Endothelial cell of umbilical vein (primary cell): ENCODE measurements at regions of chr4 and their contacts with region 1.

Region 1: DNA sequence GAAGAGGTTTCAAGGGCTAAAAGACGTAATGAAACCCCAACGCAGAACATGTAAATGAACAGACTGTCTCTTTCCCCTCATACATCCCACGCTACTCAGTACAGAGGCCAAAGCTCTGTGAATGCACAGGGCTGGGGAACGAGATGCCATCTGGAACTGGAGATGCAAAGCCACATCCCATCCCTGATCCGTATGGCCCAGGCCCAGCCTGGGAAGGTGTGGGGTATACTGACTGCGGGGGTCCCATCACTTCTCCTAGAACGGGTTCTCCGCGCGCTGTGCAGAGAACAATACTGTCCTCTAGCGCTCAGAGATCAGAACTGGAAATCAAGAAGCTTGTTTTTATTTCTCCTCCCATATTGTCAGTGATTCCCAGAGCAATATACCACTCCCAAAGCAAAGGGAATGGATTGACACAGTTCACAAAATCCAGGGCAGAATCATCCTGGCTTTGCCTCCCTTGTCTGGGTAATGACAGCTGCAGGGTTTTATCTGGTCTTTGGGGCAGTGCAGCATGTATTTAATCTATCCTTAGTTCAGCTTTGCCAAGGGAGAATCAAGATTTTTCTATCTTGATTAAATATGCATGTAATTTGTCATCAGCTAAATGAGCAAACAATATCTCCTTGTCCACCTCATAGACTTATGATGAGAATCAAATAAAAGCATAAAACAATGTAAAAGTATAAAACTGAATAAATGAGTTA is 47.3 kb upstream of the TLR3 start:
- DNase-seq: peak; percentile 69
- H3K4me3 ChIP-seq: no peak overlapping the region
- H3K27ac ChIP-seq: no peak overlapping the region
- H3K4me1 ChIP-seq: no peaks in the 10 kb centered on the region
- H3K27me3 ChIP-seq: no peaks in the 10 kb centered on the region
- CTCF ChIP-seq: peak; percentile 73 to 82
- POLR2A ChIP-seq: no peak

Region 2: GRCh38 chr4:185471235-185472102 is 550.1 kb before region 1 on chr4 and contains the start of gene CCDC110:
- CTCF ChIA-PET with region 1: interaction called, 10 read pairs
- POLR2A ChIA-PET with region 1: no interaction called
- dilution Hi-C with region 1: no loop called
- intact Hi-C with region 1: loop called (anchors 1 kb)
- DNase-seq: peak; percentile 90
- H3K4me3 ChIP-seq: peak within 1 kb of the TSS; percentile 43 to 80 (median 57)
- H3K27ac ChIP-seq: peak within 1 kb of the TSS; percentile 41
- H3K4me1 ChIP-seq: peaks cover 8% of the 10 kb centered on the region
- H3K27me3 ChIP-seq: peaks cover 15% of the 10 kb centered on the region in 2 experiments
- CTCF ChIP-seq: peak; percentile 32 to 57
- POLR2A ChIP-seq: no peak
- total RNA-seq, gene CCDC110: 0.28 and 0.71 TPM in 2 replicates

Region 3: DNA sequence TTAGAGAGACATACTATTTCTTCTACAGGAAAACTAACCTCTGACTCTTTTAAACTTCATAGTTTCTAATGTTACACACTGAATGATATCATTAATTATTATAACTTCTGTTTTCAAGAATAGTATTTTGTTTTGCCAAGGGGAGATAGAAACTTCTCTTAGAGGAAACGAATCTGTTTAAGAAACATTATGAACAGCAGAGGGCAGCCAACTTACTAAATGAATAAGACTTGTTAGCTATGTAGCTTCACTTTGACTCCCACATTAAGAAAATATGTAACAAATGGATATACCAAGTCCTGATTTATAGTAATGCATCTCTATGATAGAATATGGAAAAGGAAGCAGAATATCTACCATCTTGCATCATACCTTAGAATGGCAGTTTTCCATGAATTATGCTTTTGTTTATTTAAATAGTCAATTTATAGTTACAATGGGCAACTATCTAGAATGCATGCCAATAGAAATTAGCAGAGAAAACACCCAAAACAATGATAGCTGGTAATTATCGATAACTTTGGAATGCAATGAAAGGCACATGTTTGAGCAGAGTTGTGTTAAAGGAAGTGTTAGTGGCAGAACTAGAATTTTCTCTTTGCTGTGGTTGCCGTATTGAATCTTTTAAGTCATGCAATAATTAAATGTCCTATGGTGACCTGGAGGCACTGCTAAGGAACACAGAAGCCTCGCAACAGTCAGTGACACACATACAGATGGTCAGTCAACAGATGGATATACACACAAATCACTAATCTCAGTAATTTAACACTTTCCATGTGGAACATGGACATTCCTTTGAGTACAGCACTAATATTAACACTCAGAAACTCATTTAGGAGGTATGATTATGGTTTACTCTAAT is 380.6 kb before region 1 on chr4:
- CTCF ChIA-PET with region 1: interaction called, 380 read pairs
- POLR2A ChIA-PET with region 1: interaction called, 8 read pairs
- dilution Hi-C with region 1: loop called (anchors 25 kb)
- intact Hi-C with region 1: loop called (anchors 1 kb)
- DNase-seq: peak; percentile 69
- H3K4me3 ChIP-seq: no peak overlapping the region
- H3K27ac ChIP-seq: no peak overlapping the region
- H3K4me1 ChIP-seq: no peaks in the 10 kb centered on the region
- H3K27me3 ChIP-seq: no peaks in the 10 kb centered on the region
- CTCF ChIP-seq: peak in 1 of 2 donors; percentile 33
- POLR2A ChIP-seq: no peak

Region 4: GRCh38 chr4:185693548-185694215 is 327.9 kb before region 1 on chr4:
- CTCF ChIA-PET with region 1: interaction called, 17 read pairs
- POLR2A ChIA-PET with region 1: no interaction called
- dilution Hi-C with region 1: no loop called
- intact Hi-C with region 1: no loop called
- DNase-seq: peak; percentile 90
- H3K4me3 ChIP-seq: peak overlapping the region; percentile 1 to 46 (median 9)
- H3K27ac ChIP-seq: peak overlapping the region; percentile 84
- H3K4me1 ChIP-seq: peaks cover 19% of the 10 kb centered on the region
- H3K27me3 ChIP-seq: no peaks in the 10 kb centered on the region
- CTCF ChIP-seq: no peak
- POLR2A ChIP-seq: peak; percentile 22

Region 5: DNA sequence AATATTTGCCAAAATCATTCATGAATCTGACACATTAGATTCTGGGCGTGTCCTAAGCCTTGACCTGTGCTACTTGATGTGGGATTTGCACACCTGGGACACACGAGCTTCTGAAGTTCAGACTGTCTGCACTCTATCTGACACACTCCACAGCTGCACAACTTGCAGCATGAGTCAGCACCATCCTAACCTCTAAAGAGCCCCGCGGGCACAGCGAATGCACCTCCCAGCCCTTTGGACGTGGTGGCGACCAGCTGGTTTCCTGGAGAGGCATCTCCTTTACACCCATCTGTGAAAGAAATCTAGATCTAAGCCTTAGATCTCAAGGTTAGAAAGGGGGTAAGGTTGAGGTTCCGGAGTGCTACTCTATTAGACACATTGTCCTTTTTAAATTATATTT is 278.8 kb before region 1 on chr4:
- CTCF ChIA-PET with region 1: interaction called, 20 read pairs
- POLR2A ChIA-PET with region 1: no interaction called
- dilution Hi-C with region 1: no loop called
- intact Hi-C with region 1: no loop called
- DNase-seq: no peak
- H3K4me3 ChIP-seq: no peak overlapping the region
- H3K27ac ChIP-seq: no peak overlapping the region
- H3K4me1 ChIP-seq: peaks cover 16% of the 10 kb centered on the region
- H3K27me3 ChIP-seq: no peaks in the 10 kb centered on the region
- CTCF ChIP-seq: no peak
- POLR2A ChIP-seq: no peak

Region 6: GRCh38 chr4:185839194-185839712 is 182.4 kb before region 1 on chr4:
- CTCF ChIA-PET with region 1: interaction called, 6 read pairs
- POLR2A ChIA-PET with region 1: no interaction called
- dilution Hi-C with region 1: no loop called
- intact Hi-C with region 1: loop called (anchors 2 kb)
- DNase-seq: peak; percentile 95
- H3K4me3 ChIP-seq: no peak overlapping the region
- H3K27ac ChIP-seq: peak overlapping the region; percentile 77
- H3K4me1 ChIP-seq: peaks cover 36% of the 10 kb centered on the region
- H3K27me3 ChIP-seq: no peaks in the 10 kb centered on the region
- CTCF ChIP-seq: no peak
- POLR2A ChIP-seq: no peak